Activated naive CD4-positive, alpha-beta T cell treated with anti-CD3 and anti-CD28 coated beads for 36 hours (primary cell): ENCODE measurements at regions of chr11 and their contacts with region 1.

Region 1: DNA sequence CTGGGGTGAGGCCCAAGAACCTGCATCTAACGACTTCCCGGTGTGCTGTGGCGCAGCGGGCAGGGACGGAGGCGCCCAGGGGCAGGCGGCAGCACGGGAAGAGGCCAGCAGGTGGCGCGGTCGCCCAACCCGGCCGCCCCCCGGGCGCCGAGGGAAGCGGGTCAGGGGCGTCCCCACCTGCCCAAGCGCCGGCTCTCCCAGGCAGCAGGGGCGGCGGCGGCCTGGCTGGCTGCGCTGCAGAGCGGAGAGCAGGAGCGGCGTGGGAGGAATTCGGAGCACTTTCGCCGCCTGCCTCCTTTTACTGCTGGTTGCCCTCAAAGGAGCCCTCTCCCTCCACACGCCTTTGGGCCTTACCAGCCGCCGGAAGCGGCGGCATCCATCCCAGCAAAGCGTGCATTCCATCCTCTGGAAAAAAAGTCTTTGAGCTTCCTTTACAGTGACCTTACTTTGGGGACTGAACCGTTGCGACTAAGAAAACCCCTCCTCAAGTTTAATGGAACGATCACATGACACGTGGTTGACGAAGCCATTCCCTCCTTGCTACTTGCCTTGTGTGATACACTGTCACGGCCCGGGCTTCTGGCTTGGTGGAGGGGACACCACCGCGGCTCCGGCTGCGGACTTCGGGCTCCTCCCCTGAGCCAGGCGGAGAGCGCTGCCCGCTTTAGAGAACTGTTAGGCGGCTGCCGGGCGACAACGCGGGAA is 106.8 kb upstream of the CLMP start:
- DNase-seq: peak; percentile 82
- H3K4me3 Mint-ChIP-seq: peak overlapping the region; percentile 19
- H3K27ac Mint-ChIP-seq: peak overlapping the region; percentile 87
- H3K4me1 Mint-ChIP-seq: peaks cover 41% of the 10 kb centered on the region
- H3K27me3 Mint-ChIP-seq: peaks cover 6% of the 10 kb centered on the region

Region 2: DNA sequence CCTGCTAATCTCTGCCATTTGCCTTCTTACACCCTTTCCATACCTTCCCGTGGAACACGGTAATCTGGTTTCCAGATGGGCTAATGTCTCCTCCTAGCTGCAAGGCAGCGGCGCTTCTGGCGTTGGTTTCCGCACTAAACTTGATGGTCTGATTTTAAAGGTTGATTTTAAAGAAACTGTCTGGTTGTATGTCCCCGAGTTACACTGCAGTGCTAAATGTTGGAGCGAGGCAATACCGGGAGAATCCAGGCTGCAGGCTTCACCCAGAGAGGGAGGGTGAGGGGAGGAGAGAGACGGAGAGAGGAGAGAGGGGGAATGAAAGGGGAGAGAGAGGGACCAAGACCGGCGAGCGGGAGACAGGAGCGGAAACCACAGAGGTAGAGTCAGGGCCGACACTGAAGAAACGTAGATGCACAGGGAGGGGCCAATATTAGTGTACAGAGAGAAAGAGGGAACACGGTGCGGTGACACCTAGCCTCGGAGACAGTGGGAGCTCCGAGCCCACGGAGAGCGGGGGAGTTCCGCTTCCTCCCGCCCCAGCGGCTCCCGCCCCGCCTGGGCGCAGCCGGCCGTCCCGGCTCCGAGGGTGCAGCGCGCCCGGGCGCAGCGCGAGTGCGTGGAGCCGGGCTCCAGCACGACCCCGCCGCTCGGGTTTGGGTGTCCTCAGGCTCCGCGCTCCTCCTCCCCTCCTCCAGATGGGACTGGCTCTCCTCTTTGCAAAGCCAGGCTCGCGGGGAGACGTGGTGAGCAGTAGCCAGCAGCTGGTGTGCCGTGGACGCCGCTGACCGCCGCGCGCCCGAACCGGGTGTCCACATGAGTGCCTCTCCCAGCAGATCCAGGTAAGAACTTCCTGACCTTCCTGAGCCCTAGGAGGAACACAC is 56.4 kb after region 1 on chr11:
- CTCF ChIA-PET with region 1: interaction called, 35 read pairs
- intact Hi-C with region 1: loop called (anchors 1 kb)
- DNase-seq: peak; percentile 71
- H3K4me3 Mint-ChIP-seq: peak overlapping the region; percentile 87
- H3K27ac Mint-ChIP-seq: peak overlapping the region; percentile 77
- H3K4me1 Mint-ChIP-seq: peaks cover 42% of the 10 kb centered on the region
- H3K27me3 Mint-ChIP-seq: peaks cover 40% of the 10 kb centered on the region

Region 3: GRCh38 chr11:123407130-123407995 is 105.5 kb after region 1 on chr11:
- CTCF ChIA-PET with region 1: interaction called, 43 read pairs
- intact Hi-C with region 1: loop called (anchors 1 kb)
- DNase-seq: peak; percentile 83
- H3K4me3 Mint-ChIP-seq: peak overlapping the region; percentile 61
- H3K27ac Mint-ChIP-seq: peak overlapping the region; percentile 37
- H3K4me1 Mint-ChIP-seq: peaks cover 36% of the 10 kb centered on the region
- H3K27me3 Mint-ChIP-seq: peaks cover 18% of the 10 kb centered on the region

Region 4: DNA sequence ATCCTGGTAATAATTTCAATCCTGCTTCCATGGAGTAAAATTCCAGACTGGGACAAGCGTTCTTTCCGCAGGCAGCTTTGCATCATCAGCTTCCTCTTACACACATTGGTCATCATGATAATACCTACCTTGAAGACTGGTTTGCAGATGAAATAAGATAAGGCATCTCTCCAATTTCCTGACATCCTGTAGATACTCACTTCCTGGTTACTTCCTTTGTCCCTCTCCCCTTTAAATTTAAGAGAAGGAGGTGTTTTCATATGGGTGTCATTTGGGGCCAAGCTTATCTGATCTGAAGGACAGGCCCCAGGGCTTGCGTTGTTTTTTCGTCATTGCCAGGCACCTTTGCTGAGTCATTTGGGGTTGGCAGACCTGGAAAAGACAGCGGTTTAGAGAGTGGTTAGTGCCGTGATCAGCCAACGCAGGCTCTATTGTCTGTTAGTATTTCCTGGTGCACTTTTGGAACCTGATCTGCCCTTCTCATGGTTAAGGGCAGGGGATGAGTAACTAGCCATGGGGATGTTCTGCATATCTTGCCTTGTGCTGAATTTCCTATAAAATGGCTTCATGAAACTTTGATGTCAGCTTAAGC is 152.3 kb after region 1 on chr11:
- CTCF ChIA-PET with region 1: interaction called, 3 read pairs
- intact Hi-C with region 1: loop called (anchors 1 kb)
- DNase-seq: peak; percentile 93
- H3K4me3 Mint-ChIP-seq: peak overlapping the region; percentile 72
- H3K27ac Mint-ChIP-seq: peak overlapping the region; percentile 93
- H3K4me1 Mint-ChIP-seq: peaks cover 73% of the 10 kb centered on the region
- H3K27me3 Mint-ChIP-seq: no peaks in the 10 kb centered on the region

Region 5: GRCh38 chr11:123560006-123560405 is 258.2 kb after region 1 on chr11:
- CTCF ChIA-PET with region 1: interaction called, 4 read pairs
- intact Hi-C with region 1: loop called (anchors 1 kb)
- DNase-seq: peak; percentile 64
- H3K4me3 Mint-ChIP-seq: peak overlapping the region; percentile 68
- H3K27ac Mint-ChIP-seq: no peak overlapping the region
- H3K4me1 Mint-ChIP-seq: peaks cover 14% of the 10 kb centered on the region
- H3K27me3 Mint-ChIP-seq: peaks cover 3% of the 10 kb centered on the region

Region 6: DNA sequence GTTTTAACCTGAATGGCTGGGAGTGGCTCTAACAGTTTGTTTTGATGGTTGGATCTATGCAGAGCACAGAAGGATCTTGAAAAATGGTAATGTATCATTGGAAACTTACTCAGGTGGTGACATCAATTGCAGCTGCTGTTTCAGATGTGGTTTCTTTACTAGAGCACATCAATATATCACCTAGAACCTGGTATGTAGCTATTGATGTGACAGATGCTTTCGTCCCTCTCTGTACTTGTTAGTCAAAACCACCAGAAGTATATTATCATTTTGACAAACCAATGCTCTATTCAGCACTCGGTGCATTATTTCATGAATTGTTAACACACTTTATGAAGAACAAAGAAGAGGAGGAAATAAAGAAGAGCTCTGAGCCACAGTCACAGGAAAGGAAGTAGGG is 379.2 kb after region 1 on chr11:
- CTCF ChIA-PET with region 1: no interaction called
- intact Hi-C with region 1: loop called (anchors 2 kb)
- DNase-seq: peak; percentile 48
- H3K4me3 Mint-ChIP-seq: no peak overlapping the region
- H3K27ac Mint-ChIP-seq: peak overlapping the region; percentile 5
- H3K4me1 Mint-ChIP-seq: peaks cover 13% of the 10 kb centered on the region
- H3K27me3 Mint-ChIP-seq: no peaks in the 10 kb centered on the region

Region 7: DNA sequence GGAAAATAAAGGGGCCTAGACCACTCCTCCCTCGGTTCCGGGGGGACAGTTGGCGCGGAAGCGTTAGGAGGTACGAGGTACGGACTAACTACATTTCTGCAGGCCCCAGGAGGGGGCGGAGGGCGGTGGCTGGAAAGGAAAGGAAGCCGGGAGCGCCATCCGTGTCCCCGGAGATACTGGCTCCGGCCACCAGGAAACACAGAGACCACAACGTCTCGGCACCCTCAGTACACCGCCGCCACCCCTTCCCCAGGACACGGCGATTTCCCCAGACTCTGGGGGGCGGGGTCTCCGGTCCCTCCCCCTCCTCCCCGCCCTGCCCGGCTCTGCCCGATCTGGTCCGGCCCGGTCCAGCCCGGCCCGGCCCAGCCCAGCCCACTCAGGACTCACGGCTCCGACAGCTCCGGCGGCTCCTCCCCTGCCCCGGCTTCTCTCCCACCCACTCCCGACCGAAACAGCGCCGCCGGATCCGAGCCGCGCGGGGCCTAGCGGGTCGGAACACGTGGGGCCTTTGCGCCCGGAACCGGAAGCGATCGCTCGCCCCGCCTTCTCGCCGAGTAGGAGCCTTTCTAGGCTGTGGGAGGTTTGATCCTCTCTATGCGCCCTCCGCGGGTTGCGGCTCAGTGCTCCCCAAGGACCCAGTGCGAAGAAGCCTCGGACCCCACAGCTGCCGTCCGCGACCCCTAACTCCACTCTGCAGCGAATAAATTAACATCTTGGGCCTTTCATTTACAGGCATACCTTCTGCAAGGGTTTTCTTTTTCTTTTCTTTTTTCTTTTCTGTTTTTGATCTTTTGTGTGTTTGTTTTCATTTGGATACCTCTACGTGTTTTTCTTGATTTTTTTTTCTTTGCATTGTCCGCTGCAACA is 439.5 kb after region 1 on chr11 and contains the start of gene ZNF202:
- CTCF ChIA-PET with region 1: no interaction called
- intact Hi-C with region 1: no loop called
- DNase-seq: peak; percentile 94
- H3K4me3 Mint-ChIP-seq: peak within 1 kb of the TSS; percentile 98
- H3K27ac Mint-ChIP-seq: peak within 1 kb of the TSS; percentile 92
- H3K4me1 Mint-ChIP-seq: peaks cover 40% of the 10 kb centered on the region
- H3K27me3 Mint-ChIP-seq: no peaks in the 10 kb centered on the region
- total RNA-seq, gene ZNF202: 5.9 to 6.4 TPM